Dendritic cell treated with granulocyte-macrophage colony-stimulating factor and Interleukin-4, amounts not matched to agents 40 ng/mL and 50 ng/mL, for 4 days (primary cell): ENCODE measurements at regions of chr21 and their contacts with region 1.

Region 1: DNA sequence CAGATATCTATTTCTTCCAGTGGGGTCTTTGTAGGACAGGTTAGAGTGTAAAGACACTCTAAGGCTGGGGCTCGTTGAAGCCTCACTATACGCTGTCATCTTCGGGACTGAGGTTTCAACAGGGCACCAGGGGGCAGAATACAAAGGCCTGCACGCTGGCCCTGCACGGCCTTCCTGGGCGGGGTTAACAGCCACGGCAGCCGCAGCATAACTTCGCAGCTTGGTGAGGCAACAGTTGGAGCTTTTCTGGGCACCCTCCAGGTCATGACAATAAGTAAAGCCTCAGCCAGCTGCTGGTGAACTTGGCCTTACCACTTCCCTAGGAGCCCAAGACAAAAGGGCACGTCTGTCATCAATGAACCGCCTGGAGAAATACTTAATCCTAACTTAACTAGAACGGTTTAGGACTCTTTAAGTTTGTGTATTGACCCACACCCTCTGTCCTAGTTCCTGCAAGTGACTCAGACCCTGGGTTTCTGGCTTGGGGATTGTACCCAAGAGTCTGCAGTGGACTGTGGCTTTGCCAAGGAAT is 2.3 kb upstream of the RUNX1 start:
- H3K4me3 Mint-ChIP-seq: no peak overlapping the region
- H3K27ac Mint-ChIP-seq: peak overlapping the region; percentile 95
- H3K4me1 Mint-ChIP-seq: peaks cover 56% of the 10 kb centered on the region
- H3K27me3 Mint-ChIP-seq: no peaks in the 10 kb centered on the region

Region 2: GRCh38 chr21:34745557-34746255 is 305.6 kb before region 1 on chr21:
- intact Hi-C with region 1: loop called (anchors 10 kb)
- H3K4me3 Mint-ChIP-seq: peak overlapping the region; percentile 57
- H3K27ac Mint-ChIP-seq: no peak overlapping the region
- H3K4me1 Mint-ChIP-seq: no peaks in the 10 kb centered on the region
- H3K27me3 Mint-ChIP-seq: peaks cover 26% of the 10 kb centered on the region

Region 3: GRCh38 chr21:35102488-35103371 is 51.4 kb after region 1 on chr21:
- intact Hi-C with region 1: loop called (anchors 5 kb)
- H3K4me3 Mint-ChIP-seq: no peak overlapping the region
- H3K27ac Mint-ChIP-seq: no peak overlapping the region
- H3K4me1 Mint-ChIP-seq: peaks cover 11% of the 10 kb centered on the region
- H3K27me3 Mint-ChIP-seq: no peaks in the 10 kb centered on the region

Region 4: DNA sequence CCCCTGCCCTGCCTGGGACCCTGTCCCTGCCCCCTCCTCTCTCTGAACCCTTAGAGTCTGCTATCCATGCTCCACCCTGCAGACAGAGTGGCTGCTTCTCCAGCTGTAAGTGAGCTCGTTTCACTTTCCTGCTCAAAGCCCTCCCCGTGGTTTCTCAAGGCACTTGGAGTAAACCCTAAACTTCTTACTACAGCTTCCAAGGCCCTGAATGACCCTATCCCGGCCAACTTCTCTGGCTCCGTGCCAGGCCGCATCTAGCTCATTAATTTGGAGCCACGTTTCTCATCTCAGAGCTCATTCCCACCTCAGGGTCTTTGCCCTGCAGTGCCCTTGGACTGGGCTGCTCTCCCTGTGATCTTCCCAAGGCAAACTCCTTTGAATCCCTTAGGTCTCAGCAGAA is 232.8 kb after region 1 on chr21:
- intact Hi-C with region 1: loop called (anchors 1 kb)
- H3K4me3 Mint-ChIP-seq: no peak overlapping the region
- H3K27ac Mint-ChIP-seq: peak overlapping the region; percentile 92
- H3K4me1 Mint-ChIP-seq: peaks cover 46% of the 10 kb centered on the region
- H3K27me3 Mint-ChIP-seq: no peaks in the 10 kb centered on the region

Region 5: DNA sequence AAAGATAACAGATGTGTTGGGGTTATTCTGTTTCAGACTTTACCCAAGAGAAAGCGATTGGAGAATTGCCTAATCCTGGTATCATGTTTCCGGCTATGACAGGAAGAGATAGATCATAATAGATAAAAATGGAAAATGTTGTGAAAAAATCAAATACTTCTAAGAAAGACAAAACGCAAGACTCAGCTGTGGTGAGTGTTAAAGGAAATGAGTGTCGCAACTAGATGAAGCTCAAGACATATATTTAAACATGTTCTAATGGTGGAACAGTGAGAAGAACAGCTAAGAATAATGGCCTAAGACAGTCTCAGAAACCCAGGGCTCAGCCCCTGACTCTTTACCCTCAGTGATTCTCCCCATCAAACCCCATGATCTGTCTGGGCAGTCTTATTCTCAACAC is 424.4 kb after region 1 on chr21:
- intact Hi-C with region 1: loop called (anchors 1 kb)
- H3K4me3 Mint-ChIP-seq: no peak overlapping the region
- H3K27ac Mint-ChIP-seq: peak overlapping the region; percentile 92
- H3K4me1 Mint-ChIP-seq: peaks cover 79% of the 10 kb centered on the region
- H3K27me3 Mint-ChIP-seq: no peaks in the 10 kb centered on the region

Region 6: GRCh38 chr21:35940074-35940927 is 888.9 kb after region 1 on chr21:
- intact Hi-C with region 1: loop called (anchors 5 kb)
- H3K4me3 Mint-ChIP-seq: no peak overlapping the region
- H3K27ac Mint-ChIP-seq: no peak overlapping the region
- H3K4me1 Mint-ChIP-seq: no peaks in the 10 kb centered on the region
- H3K27me3 Mint-ChIP-seq: no peaks in the 10 kb centered on the region